HEK293 (cell line): ENCODE measurements at regions of chr7 and their contacts with region 1.

Region 1: DNA sequence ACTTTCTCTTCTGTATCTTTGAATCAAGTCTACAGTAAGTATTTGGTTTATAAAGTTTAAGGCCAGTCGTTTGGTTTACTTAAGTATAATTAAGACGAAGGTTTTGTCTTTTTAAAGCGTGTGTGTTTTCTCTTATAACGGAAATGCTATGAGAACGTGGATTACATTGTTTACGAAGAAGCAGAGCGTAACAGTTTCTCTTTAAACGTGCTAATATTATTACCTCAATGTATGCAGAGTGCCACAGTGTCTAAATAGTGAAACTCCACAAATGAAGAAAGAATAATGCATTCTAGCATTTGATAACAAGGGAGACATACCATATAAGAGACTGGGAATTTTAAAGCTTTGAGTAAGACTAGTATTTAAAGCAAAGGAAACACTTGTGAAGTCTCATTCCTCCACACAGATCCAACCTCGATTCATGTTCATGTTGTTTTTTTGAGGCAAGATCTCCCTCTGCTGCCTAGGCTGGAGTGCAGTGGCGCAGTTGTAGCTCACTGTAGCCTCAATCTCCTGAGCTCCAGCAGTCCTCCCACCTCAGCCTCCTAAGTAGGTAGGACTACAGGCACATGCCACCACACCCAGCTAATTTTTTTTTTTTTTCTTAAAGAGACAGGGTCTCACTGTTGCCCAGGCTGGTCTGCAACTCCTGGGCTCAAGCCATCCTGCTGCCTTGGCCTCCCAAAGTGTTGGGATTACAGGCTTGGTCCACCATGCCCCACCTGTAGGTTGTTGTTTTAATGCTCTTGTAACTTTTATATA is 75.1 kb downstream of the ANKRD61 start:
- H3K4me3 ChIP-seq: peak overlapping the region; percentile 67
- H3K27ac ChIP-seq: no peak overlapping the region
- H3K4me1 ChIP-seq: no peaks in the 10 kb centered on the region
- CTCF ChIP-seq: peak; percentile 46; the same call in 1 of the 2 replicates

Region 2: DNA sequence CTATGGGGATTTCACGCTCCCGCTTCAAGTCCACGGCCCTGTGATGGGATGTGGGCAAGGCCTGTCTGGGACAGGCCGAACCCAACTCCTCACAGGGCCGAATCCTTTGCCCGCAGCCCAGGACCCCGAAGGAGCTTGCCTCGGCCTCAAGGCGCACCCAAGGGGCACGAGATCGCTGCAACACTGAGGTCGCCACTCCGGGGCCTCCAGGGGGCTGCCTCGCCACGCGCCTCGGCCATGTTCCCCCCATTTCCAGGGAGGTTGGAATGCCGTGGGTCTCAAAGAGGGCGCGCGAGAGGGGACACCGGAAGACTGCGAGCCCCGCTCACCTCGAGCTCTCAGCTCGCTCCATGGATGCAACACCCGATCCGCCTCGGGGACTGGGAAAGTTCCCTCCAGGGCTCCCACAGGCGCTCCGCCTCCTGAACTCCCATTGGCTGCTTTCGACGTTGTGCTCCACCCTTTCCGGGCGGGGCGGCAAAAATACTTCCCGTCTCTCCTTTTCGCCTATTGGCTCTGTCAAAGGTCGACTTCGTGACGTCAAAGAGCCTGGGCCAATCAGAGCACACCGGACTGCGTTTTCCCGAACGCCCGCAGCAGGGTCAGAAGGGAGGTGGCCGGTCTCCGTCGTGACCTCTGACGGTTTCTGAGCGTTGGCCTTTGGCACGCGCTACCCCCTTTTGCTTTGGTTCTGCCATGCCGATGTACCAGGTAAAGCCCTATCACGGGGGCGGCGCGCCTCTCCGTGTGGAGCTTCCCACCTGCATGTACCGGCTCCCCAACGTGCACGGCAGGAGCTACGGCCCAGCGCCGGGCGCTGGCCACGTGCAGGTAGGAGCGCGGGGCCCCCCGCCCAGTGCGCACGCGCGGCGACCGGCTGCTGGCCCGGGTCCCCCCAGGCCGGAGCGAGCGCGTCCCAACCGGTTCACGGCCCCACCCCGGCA is 97.4 kb before region 1 on chr7 and contains the starts of genes AIMP2 and PMS2:
- CTCF ChIA-PET with region 1: interaction called, 13 read pairs
- POLR2A ChIA-PET with region 1: interaction called, 4 read pairs
- H3K4me3 ChIP-seq: peak within 1 kb of the TSS; percentile 69
- H3K27ac ChIP-seq: peak within 1 kb of the TSS; percentile 80
- H3K4me1 ChIP-seq: no peaks in the 10 kb centered on the region; the same call in 1 of the 2 replicates
- CTCF ChIP-seq: peak; percentile 85